ENCODE measurements at regions of chr17 and their contacts with region 1.

Region 1: DNA sequence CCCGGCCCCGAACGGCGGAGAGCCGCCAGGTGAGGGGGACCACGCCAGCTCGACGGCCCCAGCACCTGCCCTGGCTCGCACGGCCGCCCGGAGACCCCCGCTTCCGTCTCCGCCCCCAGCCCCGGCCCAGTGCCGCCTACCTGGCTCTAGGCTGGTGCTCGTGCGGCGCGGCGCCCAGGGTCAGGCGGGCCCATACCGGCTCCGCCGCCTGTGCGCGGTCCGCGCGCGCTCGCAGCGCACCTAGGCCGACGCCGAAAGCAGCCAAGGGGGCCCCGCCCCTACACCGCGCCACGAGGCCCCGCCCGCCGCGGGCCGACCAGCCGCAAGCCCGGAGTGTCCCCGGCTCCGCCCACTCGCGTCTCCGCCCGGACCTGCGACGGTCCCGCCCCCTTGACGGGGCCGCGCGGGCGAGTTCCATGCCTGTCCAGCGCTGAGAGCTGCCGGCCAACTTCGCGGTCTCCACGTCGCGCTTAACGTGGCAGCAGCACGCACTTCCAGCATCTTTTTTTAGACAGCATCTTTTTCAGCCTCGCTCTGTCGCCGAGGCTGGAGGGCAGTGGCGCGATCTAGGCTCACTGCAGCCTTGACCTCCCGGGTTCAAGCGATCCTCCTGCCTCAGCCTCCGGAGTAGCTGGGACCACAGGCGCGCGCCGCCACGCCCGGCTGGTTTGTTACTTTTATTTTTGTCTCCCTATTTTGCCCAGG is at the start of gene SLC25A39:
- DNase-seq: peak; percentile 94 to 95
- H3K4me3 ChIP-seq: peak within 1 kb of the TSS; percentile 93 to 99 (median 94)
- H3K27ac ChIP-seq: peak within 1 kb of the TSS; percentile 92 to 98
- H3K4me1 ChIP-seq: peaks cover 0 to 8% of the 10 kb centered on the region in 2 donors
- H3K27me3 ChIP-seq: no peaks in the 10 kb centered on the region
- CTCF ChIP-seq: peak in 1 of 3 donors; percentile 11
- POLR2A ChIP-seq: peak; percentile 41
- total RNA-seq, gene SLC25A39: 53.1 to 88.2 (median 64.2) TPM

Region 2: DNA sequence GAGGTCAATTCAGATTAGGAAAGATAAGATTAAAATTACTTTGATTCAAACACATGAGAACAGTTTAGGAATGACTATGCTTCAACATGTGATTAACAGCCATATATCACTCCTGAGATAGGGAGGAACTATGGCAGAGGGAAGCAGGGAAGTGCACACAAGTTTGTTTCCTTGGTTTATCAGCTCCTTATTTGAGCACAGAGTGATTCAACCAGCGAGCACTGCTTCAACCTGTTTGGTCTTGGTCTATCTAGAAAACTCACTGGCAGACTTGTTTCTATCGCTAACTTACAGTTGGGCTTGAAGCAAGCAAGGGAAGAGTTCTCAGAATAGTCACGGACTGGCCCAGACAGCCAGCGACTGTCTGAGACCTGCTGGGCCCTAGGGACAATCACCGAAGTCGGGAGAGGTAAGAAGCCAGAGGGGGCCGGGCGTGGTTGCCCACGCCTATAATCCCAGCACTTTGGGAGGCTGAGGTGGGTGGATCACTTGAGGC is 1691.7 kb before region 1 on chr17:
- intact Hi-C with region 1: no loop called
- DNase-seq: no peak
- H3K4me3 ChIP-seq: no peak overlapping the region
- H3K27ac ChIP-seq: no peak overlapping the region
- H3K4me1 ChIP-seq: no peaks in the 10 kb centered on the region
- H3K27me3 ChIP-seq: no peaks in the 10 kb centered on the region
- CTCF ChIP-seq: no peak
- POLR2A ChIP-seq: no peak

Region 3: DNA sequence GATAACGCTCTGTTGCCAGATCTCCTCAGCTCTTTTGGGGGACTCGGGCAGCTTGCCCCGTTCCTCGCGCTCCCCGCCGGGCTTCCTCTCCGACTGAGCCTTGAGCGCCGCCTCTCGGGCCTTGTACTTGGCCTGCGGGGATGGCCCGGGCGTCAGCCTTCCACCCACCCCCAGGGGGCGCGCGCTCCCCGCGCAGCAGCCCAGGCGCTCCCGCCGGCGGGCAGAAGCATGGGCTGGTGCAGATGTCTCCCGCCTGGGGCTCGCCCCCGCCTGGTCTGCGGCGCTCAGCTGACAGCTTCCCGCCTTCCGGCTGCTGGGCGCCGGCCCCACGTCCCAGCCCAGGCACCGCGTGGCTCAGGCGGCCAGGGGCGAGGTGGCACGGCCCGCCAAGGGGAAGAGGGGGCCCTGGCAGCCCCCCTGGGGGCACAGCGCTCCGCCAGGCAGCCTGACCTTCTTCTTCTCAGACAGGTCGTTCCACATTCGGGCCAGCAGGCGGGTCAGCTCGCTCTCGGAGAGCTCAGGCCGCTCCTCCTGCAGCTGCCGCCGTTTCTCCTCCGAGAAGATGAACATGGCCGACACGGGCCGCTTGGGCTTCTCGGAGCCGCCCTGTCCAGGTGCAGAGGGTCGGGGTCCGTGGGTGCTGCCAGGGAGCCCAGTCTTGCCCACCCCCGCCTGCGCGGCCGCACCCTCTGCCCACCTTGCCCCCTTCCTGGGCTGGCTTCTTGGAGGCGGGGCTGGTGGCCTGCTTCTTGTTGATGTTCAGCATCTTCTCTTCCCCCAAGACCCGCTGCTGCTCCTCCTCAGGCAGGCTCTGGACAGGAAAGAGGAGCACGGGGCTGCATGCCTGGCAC is 114.2 kb before region 1 on chr17:
- intact Hi-C with region 1: loop called (anchors 5 kb)
- DNase-seq: peak; percentile 56 to 67
- H3K4me3 ChIP-seq: peak overlapping the region in 2 of 3 donors; percentile 0 to 39
- H3K27ac ChIP-seq: peak overlapping the region in 1 of 2 donors; percentile 46
- H3K4me1 ChIP-seq: peaks cover 0 to 3% of the 10 kb centered on the region in 2 donors
- H3K27me3 ChIP-seq: no peaks in the 10 kb centered on the region
- CTCF ChIP-seq: peak; percentile 75 to 90 (median 89)
- POLR2A ChIP-seq: no peak

Region 4: DNA sequence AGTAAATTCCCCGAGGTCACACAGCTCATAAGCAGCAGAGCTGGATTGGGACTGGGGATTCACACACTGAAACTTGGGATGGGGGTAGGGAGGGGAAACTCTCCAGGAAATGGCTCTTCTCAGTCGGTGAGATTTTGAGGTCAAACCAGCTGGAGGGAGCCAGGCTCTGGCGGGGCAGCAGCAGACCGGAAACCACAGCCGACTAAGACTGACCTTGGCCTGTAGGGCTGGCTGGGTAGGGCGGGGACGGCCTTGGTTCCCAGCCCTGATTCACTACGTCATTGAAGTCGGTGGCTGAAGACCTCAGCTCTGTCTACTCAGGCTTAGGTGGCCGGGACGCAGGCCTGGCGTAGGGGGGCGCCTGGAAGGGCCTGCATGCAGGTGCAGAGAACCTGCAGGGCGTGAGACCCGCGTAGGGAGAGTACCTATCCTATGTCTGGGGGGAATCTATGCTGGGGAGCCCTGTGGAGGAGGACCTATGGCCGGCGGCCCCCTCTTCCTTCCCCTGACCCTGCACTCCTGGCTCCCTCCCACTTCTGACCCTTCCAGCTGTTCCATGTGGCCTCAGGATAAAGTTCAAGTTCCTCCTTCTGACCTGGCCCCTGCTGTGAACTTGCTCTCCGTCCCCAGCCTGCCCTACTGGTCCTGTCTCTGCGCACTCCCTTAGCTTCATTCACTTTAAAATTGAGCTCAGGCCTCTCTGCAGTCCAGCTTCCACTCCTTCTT is 44.9 kb before region 1 on chr17:
- intact Hi-C with region 1: no loop called
- DNase-seq: peak in 1 of 2 donors; percentile 32
- H3K4me3 ChIP-seq: no peak overlapping the region
- H3K27ac ChIP-seq: peak overlapping the region in 1 of 2 donors; percentile 77
- H3K4me1 ChIP-seq: no peaks in the 10 kb centered on the region
- H3K27me3 ChIP-seq: no peaks in the 10 kb centered on the region
- CTCF ChIP-seq: no peak
- POLR2A ChIP-seq: no peak

Region 5: GRCh38 chr17:44398692-44399691 is 74.3 kb after region 1 on chr17:
- intact Hi-C with region 1: no loop called
- DNase-seq: peak in 1 of 2 donors; percentile 14
- H3K4me3 ChIP-seq: no peak overlapping the region
- H3K27ac ChIP-seq: no peak overlapping the region
- H3K4me1 ChIP-seq: no peaks in the 10 kb centered on the region
- H3K27me3 ChIP-seq: no peaks in the 10 kb centered on the region
- CTCF ChIP-seq: no peak
- POLR2A ChIP-seq: no peak

Measured in breast epithelium (tissue), 4 donors.